PC-9 (cell line): ENCODE measurements at regions of chr20 and their contacts with region 1.

Region 1: GRCh38 chr20:53929974-53930650 is 140.3 kb downstream of the BCAS1 start:
- DNase-seq: no peak
- H3K4me3 ChIP-seq: no peak overlapping the region
- H3K27ac ChIP-seq: peak overlapping the region; percentile 90
- H3K4me1 ChIP-seq: peaks cover 52% of the 10 kb centered on the region
- H3K27me3 ChIP-seq: no peaks in the 10 kb centered on the region
- CTCF ChIP-seq: no peak

Region 2: DNA sequence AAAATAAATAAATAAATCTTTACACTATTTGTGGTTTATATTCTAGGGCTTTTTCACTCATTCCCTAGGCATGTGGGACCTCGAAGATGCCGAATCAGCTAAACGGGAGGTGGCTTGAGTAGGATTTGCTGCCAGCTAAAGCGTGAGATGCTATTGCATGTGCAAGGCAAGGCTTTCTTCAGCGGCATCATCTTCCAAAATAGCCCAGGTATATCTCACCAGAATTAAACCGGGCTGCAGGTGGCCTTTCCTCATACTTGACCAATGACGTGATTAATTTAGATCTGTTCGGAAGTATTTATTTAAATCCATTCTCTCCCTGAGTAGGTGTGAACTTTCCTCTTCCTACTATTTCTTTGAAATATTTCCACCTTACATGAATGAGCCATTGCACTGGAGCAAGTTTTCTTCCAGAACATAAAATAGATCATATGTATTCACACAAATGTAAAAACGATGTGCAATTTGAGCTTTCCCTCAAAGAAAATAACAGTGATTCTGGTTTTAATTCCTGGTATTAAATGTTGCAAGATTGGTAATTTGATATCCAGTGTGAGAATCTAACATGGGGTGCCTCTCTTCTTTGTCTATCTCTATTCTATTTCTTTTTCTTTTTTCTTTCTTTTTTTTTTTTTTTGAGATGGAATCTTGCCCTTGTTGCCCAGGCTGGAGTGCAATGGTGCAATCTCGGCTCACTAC is 312.2 kb before region 1 on chr20:
- CTCF ChIA-PET with region 1: no interaction called
- POLR2A ChIA-PET with region 1: interaction called, 35 read pairs
- intact Hi-C with region 1: no loop called
- DNase-seq: peak; percentile 56 to 95
- H3K4me3 ChIP-seq: no peak overlapping the region
- H3K27ac ChIP-seq: peak overlapping the region; percentile 61
- H3K4me1 ChIP-seq: peaks cover 46% of the 10 kb centered on the region
- H3K27me3 ChIP-seq: no peaks in the 10 kb centered on the region
- CTCF ChIP-seq: no peak